Breast epithelium (tissue), 4 donors: ENCODE measurements at regions of chr18 and their contacts with region 1.

Region 1: GRCh38 chr18:71008257-71008656 is 719.4 kb downstream of the SOCS6 start:
- DNase-seq: no peak
- H3K4me3 ChIP-seq: no peak overlapping the region
- H3K27ac ChIP-seq: no peak overlapping the region
- H3K4me1 ChIP-seq: no peaks in the 10 kb centered on the region
- H3K27me3 ChIP-seq: no peaks in the 10 kb centered on the region
- CTCF ChIP-seq: no peak
- POLR2A ChIP-seq: no peak

Region 2: DNA sequence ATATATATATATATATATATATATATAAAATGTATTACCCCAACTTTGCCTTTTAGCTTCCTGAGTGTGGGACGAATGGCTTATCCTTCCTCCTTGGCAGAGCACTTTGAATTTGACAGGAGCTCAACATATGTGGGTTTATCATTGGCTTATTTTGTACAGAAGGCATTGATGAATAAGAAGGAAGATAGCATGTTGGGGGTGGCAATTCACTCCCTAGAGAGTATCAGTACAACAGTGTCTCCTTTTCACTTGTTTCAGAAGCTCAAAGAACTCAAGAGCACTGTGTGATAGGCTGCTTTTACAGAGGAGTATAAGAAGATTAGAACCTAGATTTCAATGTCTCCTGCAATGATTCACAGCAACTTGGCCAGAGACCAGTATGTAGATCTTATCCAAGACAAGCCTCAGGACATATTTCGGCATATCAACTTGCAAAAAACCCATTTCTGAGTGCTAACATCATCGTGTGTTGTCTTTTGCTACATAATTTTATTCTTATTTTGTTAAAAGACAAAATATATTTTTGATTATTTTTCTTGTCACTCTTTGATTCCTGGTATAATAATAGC is 373.6 kb before region 1 on chr18:
- intact Hi-C with region 1: loop called (anchors 5 kb)
- DNase-seq: no peak
- H3K4me3 ChIP-seq: no peak overlapping the region
- H3K27ac ChIP-seq: no peak overlapping the region
- H3K4me1 ChIP-seq: no peaks in the 10 kb centered on the region
- H3K27me3 ChIP-seq: no peaks in the 10 kb centered on the region
- CTCF ChIP-seq: no peak
- POLR2A ChIP-seq: no peak

Region 3: GRCh38 chr18:71020342-71021029 is 12.2 kb after region 1 on chr18:
- intact Hi-C with region 1: no loop called
- DNase-seq: no peak
- H3K4me3 ChIP-seq: no peak overlapping the region
- H3K27ac ChIP-seq: no peak overlapping the region
- H3K4me1 ChIP-seq: no peaks in the 10 kb centered on the region
- H3K27me3 ChIP-seq: no peaks in the 10 kb centered on the region
- CTCF ChIP-seq: no peak
- POLR2A ChIP-seq: no peak